ENCODE measurements at regions of chr10 and their contacts with region 1.

Region 1: DNA sequence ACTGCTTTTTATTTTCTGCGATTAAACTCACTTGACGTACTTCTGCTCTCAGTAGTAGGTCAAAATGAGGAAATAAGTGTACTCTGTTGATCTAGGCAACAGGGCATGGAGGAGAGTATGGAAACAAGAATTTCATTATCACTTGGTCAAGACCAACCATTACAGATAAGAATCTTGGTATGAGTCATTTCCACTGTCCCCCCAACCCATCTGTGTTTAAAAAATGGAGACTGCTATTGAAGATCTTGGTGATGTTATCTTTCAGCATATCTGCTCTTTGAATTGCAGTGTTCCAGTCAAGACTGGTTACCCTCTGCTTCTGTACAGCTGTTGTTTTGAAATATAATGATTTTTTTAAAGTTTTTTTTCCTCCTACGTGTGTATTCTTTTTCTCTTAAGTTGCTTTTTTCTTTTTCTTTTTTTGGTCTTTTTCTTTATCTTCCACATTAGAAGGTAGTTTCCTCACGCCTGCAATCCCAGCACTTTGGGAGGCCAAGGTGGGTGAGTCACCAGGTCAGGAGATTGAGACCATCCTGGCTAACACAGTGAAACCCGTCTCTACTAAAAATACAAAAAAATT is 11.7 kb downstream of the STAM start:
- DNase-seq: peak in 3 of 14 experiments; percentile 38 to 52 (median 47)
- ATAC-seq: peak; percentile 54
- H3K4me3 ChIP-seq: peak overlapping the region; percentile 15
- H3K4me3 Mint-ChIP-seq: peak overlapping the region; percentile 22
- H3K27ac ChIP-seq: peak overlapping the region in 1 of 2 donors; percentile 46
- H3K27ac Mint-ChIP-seq: peak overlapping the region; percentile 61
- H3K4me1 ChIP-seq: peaks cover 10% of the 10 kb centered on the region
- H3K4me1 Mint-ChIP-seq: peaks cover 74% of the 10 kb centered on the region
- H3K27me3 ChIP-seq: no peaks in the 10 kb centered on the region
- H3K27me3 Mint-ChIP-seq: no peaks in the 10 kb centered on the region
- CTCF ChIP-seq: no peak

Region 2: GRCh38 chr10:17633353-17633752 is 22.3 kb before region 1 on chr10:
- CTCF ChIA-PET with region 1: no interaction called
- POLR2A ChIA-PET with region 1: no interaction called
- intact Hi-C with region 1: no loop called
- DNase-seq: no peak
- ATAC-seq: no peak
- H3K4me3 ChIP-seq: no peak overlapping the region
- H3K4me3 Mint-ChIP-seq: no peak overlapping the region
- H3K27ac ChIP-seq: no peak overlapping the region
- H3K27ac Mint-ChIP-seq: no peak overlapping the region
- H3K4me1 ChIP-seq: no peaks in the 10 kb centered on the region
- H3K4me1 Mint-ChIP-seq: no peaks in the 10 kb centered on the region
- H3K27me3 ChIP-seq: no peaks in the 10 kb centered on the region
- H3K27me3 Mint-ChIP-seq: no peaks in the 10 kb centered on the region
- CTCF ChIP-seq: no peak

Region 3: DNA sequence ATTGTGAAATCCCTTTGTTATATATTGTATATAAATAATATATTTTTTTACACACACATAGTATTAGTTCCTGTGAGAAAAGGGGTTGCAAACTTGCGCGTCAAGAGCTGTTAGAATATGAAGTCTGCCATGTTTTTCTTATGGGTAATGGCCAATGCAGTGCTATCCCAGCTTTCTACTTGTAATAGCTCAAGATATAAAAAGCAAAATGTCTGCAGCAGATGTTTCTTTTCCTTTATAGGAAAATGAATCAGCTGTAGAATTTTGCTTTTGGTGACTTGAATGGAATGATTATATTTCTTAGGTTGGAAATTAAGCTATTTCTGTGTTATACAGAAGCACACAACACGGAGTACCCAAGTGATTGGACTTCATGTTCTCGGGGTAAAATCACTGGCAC is 43.0 kb after region 1 on chr10:
- CTCF ChIA-PET with region 1: interaction called, 3 read pairs
- POLR2A ChIA-PET with region 1: no interaction called
- intact Hi-C with region 1: loop called in 1 of 2 experiments (anchors 5 kb)
- DNase-seq: no peak
- ATAC-seq: no peak
- H3K4me3 ChIP-seq: no peak overlapping the region
- H3K4me3 Mint-ChIP-seq: no peak overlapping the region
- H3K27ac ChIP-seq: no peak overlapping the region
- H3K27ac Mint-ChIP-seq: no peak overlapping the region
- H3K4me1 ChIP-seq: no peaks in the 10 kb centered on the region
- H3K4me1 Mint-ChIP-seq: no peaks in the 10 kb centered on the region
- H3K27me3 ChIP-seq: no peaks in the 10 kb centered on the region
- H3K27me3 Mint-ChIP-seq: no peaks in the 10 kb centered on the region
- CTCF ChIP-seq: no peak

Region 4: GRCh38 chr10:18261063-18261610 is 605.5 kb after region 1 on chr10:
- CTCF ChIA-PET with region 1: no interaction called
- POLR2A ChIA-PET with region 1: no interaction called
- intact Hi-C with region 1: no loop called
- DNase-seq: no peak
- ATAC-seq: no peak
- H3K4me3 ChIP-seq: no peak overlapping the region
- H3K4me3 Mint-ChIP-seq: no peak overlapping the region
- H3K27ac ChIP-seq: no peak overlapping the region
- H3K27ac Mint-ChIP-seq: no peak overlapping the region
- H3K4me1 ChIP-seq: no peaks in the 10 kb centered on the region
- H3K4me1 Mint-ChIP-seq: no peaks in the 10 kb centered on the region
- H3K27me3 ChIP-seq: no peaks in the 10 kb centered on the region
- H3K27me3 Mint-ChIP-seq: peaks cover 7% of the 10 kb centered on the region
- CTCF ChIP-seq: no peak